ENCODE measurements at regions of chr9 and their contacts with region 1.

Region 1: DNA sequence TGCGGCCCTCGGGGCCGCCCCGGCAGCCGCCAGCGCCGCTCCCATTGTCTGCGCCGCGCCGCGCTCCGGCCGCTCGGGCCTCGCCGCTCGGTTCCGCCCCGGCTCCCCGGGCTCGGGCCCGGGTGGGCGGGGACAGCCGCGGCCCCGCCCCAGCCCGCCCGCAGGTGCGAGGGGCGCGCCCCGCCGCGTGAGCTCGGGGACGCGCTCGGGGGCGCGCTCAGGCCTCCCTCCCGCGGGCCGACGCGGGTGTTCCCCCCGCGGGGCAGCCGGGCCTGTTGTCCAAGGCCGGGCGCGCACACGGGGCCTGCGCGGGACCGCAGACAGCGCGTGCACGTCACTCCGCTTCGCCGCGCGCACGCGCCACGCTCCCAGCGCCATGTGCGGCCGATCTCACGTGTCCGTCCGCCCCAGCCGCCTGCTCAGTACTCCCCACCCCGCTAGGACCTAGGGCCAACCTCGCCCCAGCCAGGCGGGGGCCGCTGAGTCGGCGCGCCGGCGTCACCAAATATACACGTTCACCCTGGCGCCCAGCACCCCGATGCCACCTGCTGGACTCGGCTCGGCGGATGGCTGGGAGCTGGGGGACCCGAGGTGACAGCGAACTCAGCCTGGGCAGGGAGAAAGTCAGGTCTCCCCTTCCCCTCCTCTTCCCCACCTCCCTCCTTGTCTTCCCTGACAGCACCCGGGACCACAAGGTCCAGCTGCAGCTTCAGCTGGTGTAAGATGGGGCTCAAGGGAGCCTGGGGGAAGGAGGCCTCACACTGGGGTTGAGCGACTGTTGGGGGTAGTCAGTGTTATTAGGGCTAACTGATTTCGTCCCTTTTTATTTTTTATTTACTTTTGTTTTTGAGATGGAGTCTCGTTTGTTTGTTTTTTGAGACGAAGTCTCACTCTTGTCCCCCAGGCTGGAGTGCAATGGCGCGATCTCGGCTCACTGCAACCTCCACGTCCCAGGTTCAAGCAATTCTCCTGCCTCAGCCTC is 14.3 kb downstream of the GBGT1 start:
- DNase-seq: peak; percentile 76
- H3K4me3 Mint-ChIP-seq: peak overlapping the region; percentile 81
- H3K27ac Mint-ChIP-seq: peak overlapping the region; percentile 81
- H3K4me1 Mint-ChIP-seq: peaks cover 31% of the 10 kb centered on the region
- H3K27me3 Mint-ChIP-seq: peaks cover 3% of the 10 kb centered on the region

Region 2: GRCh38 chr9:132944302-132945185 is 204.9 kb before region 1 on chr9 and contains the start of gene TSC1:
- intact Hi-C with region 1: loop called (anchors 2 kb)
- DNase-seq: peak; percentile 93
- H3K4me3 Mint-ChIP-seq: peak within 1 kb of the TSS; percentile 94
- H3K27ac Mint-ChIP-seq: peak within 1 kb of the TSS; percentile 99
- H3K4me1 Mint-ChIP-seq: peaks cover 23% of the 10 kb centered on the region
- H3K27me3 Mint-ChIP-seq: peaks cover 2% of the 10 kb centered on the region
- total RNA-seq, gene TSC1: 30.2 and 34.8 TPM in 2 replicates

Region 3: GRCh38 chr9:133048569-133048968 is 100.8 kb before region 1 on chr9:
- intact Hi-C with region 1: loop called (anchors 1 kb)
- DNase-seq: peak; percentile 30
- H3K4me3 Mint-ChIP-seq: no peak overlapping the region
- H3K27ac Mint-ChIP-seq: no peak overlapping the region
- H3K4me1 Mint-ChIP-seq: peaks cover 6% of the 10 kb centered on the region
- H3K27me3 Mint-ChIP-seq: no peaks in the 10 kb centered on the region

Region 4: DNA sequence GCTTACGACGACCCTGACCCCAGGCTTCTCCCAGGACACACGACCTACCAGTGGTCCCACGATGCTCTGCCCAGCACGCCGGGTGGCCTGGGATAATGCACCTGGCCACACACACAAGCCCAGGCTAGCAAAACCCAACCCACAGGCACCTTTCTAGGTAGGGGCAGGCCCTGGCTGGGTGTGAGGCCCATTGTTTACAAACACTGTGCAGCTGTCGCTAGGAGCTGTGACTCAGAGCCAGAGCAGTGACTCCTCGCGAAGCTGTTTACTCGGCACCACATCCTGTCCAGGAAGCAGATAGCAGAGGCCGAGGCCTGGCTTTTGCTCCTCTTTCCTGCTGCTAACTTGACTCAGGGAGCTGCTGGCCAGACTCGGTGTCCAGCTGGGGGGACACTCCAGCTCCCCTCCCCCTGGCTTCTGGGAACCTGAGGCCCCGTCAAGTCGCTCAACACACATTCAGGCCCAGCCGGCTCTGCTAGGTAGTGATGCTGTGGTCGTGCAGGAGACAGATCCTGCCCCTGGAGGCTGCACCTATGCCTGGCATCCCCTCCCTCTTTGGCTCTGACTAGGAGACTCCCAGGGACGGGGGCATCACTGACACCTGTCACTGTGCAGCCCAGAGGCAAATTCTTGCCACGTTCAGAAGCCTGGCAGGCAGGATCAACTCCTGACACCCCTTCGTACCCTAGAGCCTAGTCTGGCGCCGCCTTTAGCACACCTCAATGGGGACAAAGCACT is 15.6 kb before region 1 on chr9:
- intact Hi-C with region 1: loop called (anchors 1 kb)
- DNase-seq: peak; percentile 91
- H3K4me3 Mint-ChIP-seq: peak overlapping the region; percentile 81
- H3K27ac Mint-ChIP-seq: peak overlapping the region; percentile 100
- H3K4me1 Mint-ChIP-seq: peaks cover 67% of the 10 kb centered on the region
- H3K27me3 Mint-ChIP-seq: no peaks in the 10 kb centered on the region

Region 5: GRCh38 chr9:133347985-133348717 is 198.7 kb after region 1 on chr9 and contains the starts of genes MED22 and RPL7A:
- intact Hi-C with region 1: loop called (anchors 5 kb)
- DNase-seq: peak; percentile 90
- H3K4me3 Mint-ChIP-seq: peak within 1 kb of the TSS; percentile 93
- H3K27ac Mint-ChIP-seq: peak within 1 kb of the TSS; percentile 99
- H3K4me1 Mint-ChIP-seq: peaks cover 36% of the 10 kb centered on the region
- H3K27me3 Mint-ChIP-seq: peaks cover 2% of the 10 kb centered on the region
- total RNA-seq, gene MED22: 37.9 and 40.5 TPM in 2 replicates
- total RNA-seq, gene RPL7A: 2,401 and 2,463 TPM in 2 replicates

Region 6: GRCh38 chr9:133429641-133430161 is 280.3 kb after region 1 on chr9:
- intact Hi-C with region 1: no loop called
- DNase-seq: no peak
- H3K4me3 Mint-ChIP-seq: no peak overlapping the region
- H3K27ac Mint-ChIP-seq: no peak overlapping the region
- H3K4me1 Mint-ChIP-seq: no peaks in the 10 kb centered on the region
- H3K27me3 Mint-ChIP-seq: peaks cover 30% of the 10 kb centered on the region